ENCODE measurements at regions of chr2 and their contacts with region 1.

Region 1: DNA sequence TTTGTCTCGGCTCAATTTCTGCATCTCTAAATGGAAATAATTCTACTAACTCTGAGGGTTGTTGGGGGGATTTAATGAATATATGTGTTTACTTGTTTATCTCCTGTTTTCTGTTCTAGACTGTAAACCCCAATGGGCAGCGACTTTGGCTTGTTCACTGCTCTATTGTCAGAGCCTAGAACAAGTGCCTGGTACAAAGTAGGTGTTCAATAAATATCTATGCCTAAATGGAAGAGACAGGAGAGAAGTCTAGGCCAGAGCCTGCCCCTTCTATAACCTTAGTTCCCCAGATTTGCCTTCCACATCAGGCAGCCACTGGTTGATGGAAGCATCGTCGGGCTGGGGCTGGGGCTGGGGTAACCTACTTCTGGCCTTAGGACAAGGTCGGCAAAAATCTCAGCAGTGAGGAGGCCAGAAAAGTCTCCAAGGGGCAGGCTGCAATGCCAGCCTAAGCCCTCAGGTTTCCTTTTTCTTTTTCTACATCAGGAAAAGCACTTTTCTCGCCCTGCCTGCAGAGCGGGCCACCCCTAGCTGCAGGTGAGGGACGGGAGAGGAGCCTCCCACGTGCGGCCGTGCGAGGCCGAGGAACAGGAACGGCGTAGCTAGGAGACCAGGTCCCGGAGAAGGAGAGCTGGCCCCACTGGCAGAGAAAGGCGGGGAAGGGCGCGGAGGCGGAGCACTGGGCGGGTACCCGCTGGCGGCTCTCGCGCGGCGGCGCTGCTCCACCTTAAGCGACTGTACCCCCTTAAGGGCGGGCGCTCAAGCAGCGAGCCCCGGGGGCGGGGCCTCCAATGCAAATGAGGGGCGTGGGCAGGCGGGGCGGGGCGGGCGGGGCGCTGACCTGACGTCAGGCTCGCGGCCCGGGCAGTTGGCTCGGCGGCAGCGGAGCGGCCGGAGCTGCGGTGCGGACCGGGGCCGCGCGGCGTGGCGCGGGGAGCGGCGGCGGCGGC is at the start of gene CNNM4:
- DNase-seq: peak; percentile 82 to 95 (median 91)
- ATAC-seq: peak; percentile 96
- H3K4me3 ChIP-seq: peak within 1 kb of the TSS; percentile 83
- H3K4me3 Mint-ChIP-seq: peak within 1 kb of the TSS; percentile 85 to 96 (median 89)
- H3K27ac ChIP-seq: peak within 1 kb of the TSS; percentile 81
- H3K27ac Mint-ChIP-seq: peak within 1 kb of the TSS; percentile 80 to 94 (median 90)
- H3K4me1 ChIP-seq: peaks cover 46 to 53% of the 10 kb centered on the region in 2 donors
- H3K4me1 Mint-ChIP-seq: peaks cover 41 to 57% (median 49%) of the 10 kb centered on the region in 7 donors
- H3K27me3 ChIP-seq: no peaks in the 10 kb centered on the region
- H3K27me3 Mint-ChIP-seq: no peaks in the 10 kb centered on the region
- total RNA-seq, gene CNNM4: 4.6 to 9.5 (median 5.5) TPM

Region 2: DNA sequence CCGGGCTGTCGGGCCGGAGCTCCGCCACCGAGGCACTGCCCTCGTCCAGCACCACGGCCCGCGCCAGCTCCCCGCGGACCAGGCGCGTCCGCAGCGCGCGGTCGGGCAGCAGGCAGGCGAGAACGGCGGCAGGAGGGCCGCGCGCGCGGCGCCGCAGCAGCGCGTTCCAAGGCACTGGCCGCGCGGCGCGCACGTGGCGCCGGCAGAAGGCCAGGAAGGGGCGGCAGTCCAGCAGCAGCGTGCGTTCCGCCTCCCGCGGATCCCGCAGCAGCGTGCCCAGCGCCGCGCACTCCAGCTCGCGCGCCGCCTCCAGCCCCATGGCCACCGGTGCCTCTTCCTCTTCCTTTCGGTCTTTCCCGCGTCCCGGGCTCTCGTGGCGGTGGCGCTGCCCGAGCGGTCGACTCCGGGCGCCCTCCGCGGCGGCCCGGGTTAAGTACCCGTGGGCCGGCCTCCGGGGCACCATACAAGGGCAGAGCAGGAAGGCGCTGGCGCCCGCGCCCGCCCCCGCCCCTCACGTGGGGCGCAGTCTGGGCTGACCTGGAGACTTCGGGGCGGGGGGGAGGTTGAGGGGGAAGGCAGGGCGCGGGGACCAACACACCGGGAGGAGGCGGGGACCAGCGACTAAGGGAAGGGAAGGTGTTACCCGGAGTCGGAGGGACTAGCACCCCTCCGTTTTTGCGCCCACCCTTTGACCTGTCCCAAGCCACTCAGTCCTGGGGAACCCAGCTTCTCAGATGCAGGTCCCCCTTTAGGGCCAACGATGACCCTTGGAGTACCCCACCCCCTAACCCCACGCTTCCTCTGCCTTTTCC is 615.1 kb before region 1 on chr2 and contains the start of gene DUSP2:
- CTCF ChIA-PET with region 1: no interaction called
- POLR2A ChIA-PET with region 1: no interaction called
- intact Hi-C with region 1: loop called in 1 of 2 experiments (anchors 5 kb)
- DNase-seq: peak; percentile 79 to 97 (median 83)
- ATAC-seq: peak; percentile 61
- H3K4me3 ChIP-seq: peak within 1 kb of the TSS; percentile 69
- H3K4me3 Mint-ChIP-seq: peak within 1 kb of the TSS; percentile 90 to 98 (median 95)
- H3K27ac ChIP-seq: peak within 1 kb of the TSS; percentile 99
- H3K27ac Mint-ChIP-seq: peak within 1 kb of the TSS; percentile 96 to 100 (median 99)
- H3K4me1 ChIP-seq: peaks cover 50 to 52% of the 10 kb centered on the region in 2 donors
- H3K4me1 Mint-ChIP-seq: peaks cover 35 to 69% (median 62%) of the 10 kb centered on the region in 7 donors
- H3K27me3 ChIP-seq: no peaks in the 10 kb centered on the region
- H3K27me3 Mint-ChIP-seq: no peaks in the 10 kb centered on the region
- total RNA-seq, gene DUSP2: 22.1 to 255 (median 50.3) TPM

Region 3: DNA sequence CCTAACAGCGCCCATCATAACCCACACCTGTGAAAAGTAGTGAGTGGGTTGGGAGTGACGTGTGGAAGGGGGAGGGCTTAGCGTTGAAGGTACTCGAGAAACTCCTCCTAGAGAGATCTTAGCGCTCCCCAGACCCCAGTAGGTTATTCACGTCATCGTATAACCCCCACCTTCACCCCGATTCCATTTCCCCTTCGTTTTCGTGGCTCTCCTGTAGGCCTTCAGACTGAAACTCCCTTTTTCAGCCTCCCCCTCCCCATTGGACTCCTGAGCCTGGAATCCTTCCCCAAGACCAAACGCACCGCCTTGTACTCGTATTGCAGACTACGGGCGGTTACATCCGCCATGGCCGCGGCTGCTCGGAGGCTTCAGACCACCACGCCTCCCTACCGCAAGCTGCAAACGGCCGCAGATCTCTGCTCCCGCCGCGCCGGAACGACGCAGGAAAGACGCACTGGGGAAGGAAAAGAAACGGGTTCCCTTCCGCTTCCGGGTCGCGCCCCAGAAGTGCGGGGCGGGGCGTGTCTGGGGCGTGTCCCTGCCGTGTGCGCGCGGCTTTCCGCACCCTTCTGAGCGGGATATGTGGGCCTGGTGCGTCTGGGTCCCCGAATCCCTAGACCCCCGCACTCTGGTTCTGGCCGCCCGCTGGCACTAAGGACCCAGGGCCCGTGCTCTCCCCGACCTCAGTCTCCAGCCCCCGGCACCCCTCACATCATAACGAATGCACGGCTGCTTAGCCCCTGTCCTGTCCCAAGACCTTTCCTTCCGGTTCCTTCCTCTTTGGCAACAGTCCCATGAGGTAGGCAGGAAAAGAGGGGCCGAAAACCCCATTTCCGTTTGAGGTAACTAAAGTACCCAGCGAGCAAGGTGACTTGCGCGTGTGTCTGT is 455.0 kb before region 1 on chr2 and contains the start of gene SNRNP200:
- CTCF ChIA-PET with region 1: no interaction called
- POLR2A ChIA-PET with region 1: no interaction called
- intact Hi-C with region 1: loop called in 1 of 2 experiments (anchors 5 kb)
- DNase-seq: peak; percentile 77 to 92 (median 90)
- ATAC-seq: peak; percentile 96
- H3K4me3 ChIP-seq: peak within 1 kb of the TSS; percentile 85
- H3K4me3 Mint-ChIP-seq: peak within 1 kb of the TSS; percentile 94 to 100 (median 99)
- H3K27ac ChIP-seq: peak within 1 kb of the TSS; percentile 94
- H3K27ac Mint-ChIP-seq: peak within 1 kb of the TSS; percentile 97 to 100 (median 99)
- H3K4me1 ChIP-seq: peaks cover 30 to 41% of the 10 kb centered on the region in 2 donors
- H3K4me1 Mint-ChIP-seq: peaks cover 41 to 61% (median 58%) of the 10 kb centered on the region in 7 donors
- H3K27me3 ChIP-seq: no peaks in the 10 kb centered on the region
- H3K27me3 Mint-ChIP-seq: no peaks in the 10 kb centered on the region
- total RNA-seq, gene SNRNP200: 165 to 255 (median 212) TPM

Region 4: DNA sequence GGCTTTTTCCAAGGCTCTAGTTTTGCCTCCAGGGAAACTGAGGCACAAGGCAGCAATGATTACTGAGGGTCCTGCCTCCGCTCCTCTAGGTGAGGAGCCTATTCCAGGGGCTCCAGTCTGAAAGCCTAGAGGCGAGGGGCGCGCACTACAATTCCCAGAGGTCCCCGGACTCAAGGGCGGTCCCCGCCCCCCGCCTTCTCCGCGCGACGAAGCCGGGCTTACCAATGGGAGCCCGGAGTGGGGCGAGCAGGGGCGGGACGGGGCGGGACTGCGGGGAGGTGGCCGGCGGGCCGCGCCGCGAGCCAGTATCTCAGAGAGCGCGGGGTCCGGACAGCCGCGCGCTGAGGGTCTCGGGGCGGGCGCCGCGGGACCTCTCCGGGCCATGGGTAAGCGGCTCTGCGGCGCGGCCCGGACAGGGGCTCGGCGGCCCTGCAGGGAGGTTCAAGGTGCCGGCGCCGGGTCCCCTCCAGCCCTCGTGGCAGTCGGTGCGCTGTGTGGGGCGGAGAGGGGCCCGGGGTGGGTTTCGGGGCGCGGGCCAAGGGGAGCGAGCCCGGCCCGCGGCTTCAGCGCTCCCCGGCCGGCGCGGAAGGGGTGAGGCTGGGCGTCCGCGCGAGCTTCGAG is 223.8 kb before region 1 on chr2 and contains the start of gene ARID5A:
- CTCF ChIA-PET with region 1: no interaction called
- POLR2A ChIA-PET with region 1: interaction called, 17 read pairs
- intact Hi-C with region 1: loop called (anchors 2 to 5 kb)
- DNase-seq: peak; percentile 82 to 93 (median 88)
- ATAC-seq: peak; percentile 70
- H3K4me3 ChIP-seq: peak within 1 kb of the TSS; percentile 84
- H3K4me3 Mint-ChIP-seq: peak within 1 kb of the TSS; percentile 91 to 98 (median 96)
- H3K27ac ChIP-seq: peak within 1 kb of the TSS; percentile 99
- H3K27ac Mint-ChIP-seq: peak within 1 kb of the TSS; percentile 97 to 100 (median 99)
- H3K4me1 ChIP-seq: peaks cover 39 to 41% of the 10 kb centered on the region in 2 donors
- H3K4me1 Mint-ChIP-seq: peaks cover 37 to 74% (median 50%) of the 10 kb centered on the region in 7 donors
- H3K27me3 ChIP-seq: no peaks in the 10 kb centered on the region
- H3K27me3 Mint-ChIP-seq: no peaks in the 10 kb centered on the region
- total RNA-seq, gene ARID5A: 82.4 to 182 (median 113) TPM

Region 5: DNA sequence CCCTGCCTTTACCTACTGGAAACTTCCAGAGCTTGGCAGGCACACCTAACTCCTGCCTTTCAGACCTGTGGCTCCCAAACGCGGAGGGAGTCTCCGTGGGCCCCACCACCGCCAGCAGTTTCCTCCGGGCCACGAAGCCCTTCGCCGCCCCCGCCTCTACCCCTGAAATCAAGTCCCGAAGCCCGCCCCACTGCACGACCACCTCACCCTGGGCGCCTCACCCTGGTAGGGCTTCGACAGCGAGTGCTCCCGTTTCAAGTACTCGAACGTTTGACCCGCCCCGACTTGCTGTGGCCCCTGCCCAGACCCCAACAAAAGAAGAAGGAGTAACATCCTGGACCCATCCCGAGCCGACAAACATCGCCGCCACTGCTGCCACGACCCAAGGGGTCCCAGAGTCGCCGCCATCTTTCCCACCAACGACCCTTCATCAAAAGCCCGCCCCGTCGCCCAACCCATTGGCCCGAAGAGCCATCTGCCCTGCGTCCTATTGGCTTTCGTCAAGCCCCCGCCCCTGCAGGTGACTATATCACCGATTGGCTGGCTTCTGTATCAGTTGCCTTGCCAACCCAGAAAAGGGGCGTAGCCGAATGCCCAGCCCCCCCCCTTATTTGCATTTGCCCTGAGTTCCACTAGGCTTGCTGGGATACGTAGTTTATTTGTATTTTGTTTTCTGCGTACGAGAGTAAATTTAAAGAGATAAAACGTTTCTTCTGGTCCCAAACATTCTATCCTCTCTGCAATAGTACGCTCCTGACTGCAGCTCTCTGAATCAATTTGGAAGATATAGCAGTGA is 20.5 kb before region 1 on chr2 and contains the start of gene LMAN2L:
- CTCF ChIA-PET with region 1: interaction called, 8 read pairs
- POLR2A ChIA-PET with region 1: interaction called, 6 read pairs
- intact Hi-C with region 1: loop called (anchors 1 kb)
- DNase-seq: peak; percentile 78 to 99 (median 94)
- ATAC-seq: peak; percentile 100
- H3K4me3 ChIP-seq: peak within 1 kb of the TSS; percentile 70
- H3K4me3 Mint-ChIP-seq: peak within 1 kb of the TSS; percentile 92 to 100 (median 97)
- H3K27ac ChIP-seq: peak within 1 kb of the TSS; percentile 75
- H3K27ac Mint-ChIP-seq: peak within 1 kb of the TSS; percentile 83 to 96 (median 90)
- H3K4me1 ChIP-seq: peaks cover 6% of the 10 kb centered on the region in 2 donors
- H3K4me1 Mint-ChIP-seq: peaks cover 20 to 48% (median 37%) of the 10 kb centered on the region in 7 donors
- H3K27me3 ChIP-seq: no peaks in the 10 kb centered on the region
- H3K27me3 Mint-ChIP-seq: no peaks in the 10 kb centered on the region
- total RNA-seq, gene LMAN2L: 5.0 to 10.9 (median 9.2) TPM

Region 6: GRCh38 chr2:96816128-96816835 is 56.0 kb after region 1 on chr2 and contains the start of gene CNNM3:
- CTCF ChIA-PET with region 1: interaction called, 3 read pairs
- POLR2A ChIA-PET with region 1: interaction called, 9 read pairs
- intact Hi-C with region 1: loop called (anchors 1 to 5 kb)
- DNase-seq: peak; percentile 89 to 99 (median 93)
- ATAC-seq: peak; percentile 96
- H3K4me3 ChIP-seq: peak within 1 kb of the TSS; percentile 74
- H3K4me3 Mint-ChIP-seq: peak within 1 kb of the TSS; percentile 86 to 96 (median 92)
- H3K27ac ChIP-seq: peak within 1 kb of the TSS; percentile 79
- H3K27ac Mint-ChIP-seq: peak within 1 kb of the TSS; percentile 75 to 96 (median 86)
- H3K4me1 ChIP-seq: peaks cover 37 to 43% of the 10 kb centered on the region in 2 donors
- H3K4me1 Mint-ChIP-seq: peaks cover 36 to 62% (median 58%) of the 10 kb centered on the region in 7 donors
- H3K27me3 ChIP-seq: no peaks in the 10 kb centered on the region
- H3K27me3 Mint-ChIP-seq: no peaks in the 10 kb centered on the region
- total RNA-seq, gene CNNM3: 32.1 to 51.5 (median 44.6) TPM

Region 7: GRCh38 chr2:96960153-96960961 is 200.0 kb after region 1 on chr2:
- CTCF ChIA-PET with region 1: no interaction called
- POLR2A ChIA-PET with region 1: interaction called, 6 read pairs
- intact Hi-C with region 1: loop called in 1 of 2 experiments (anchors 1 kb)
- DNase-seq: peak; percentile 58 to 87 (median 75)
- ATAC-seq: peak; percentile 50
- H3K4me3 ChIP-seq: no peak overlapping the region
- H3K4me3 Mint-ChIP-seq: peak overlapping the region; percentile 37 to 83 (median 64)
- H3K27ac ChIP-seq: no peak overlapping the region
- H3K27ac Mint-ChIP-seq: peak overlapping the region; percentile 55 to 99 (median 92)
- H3K4me1 ChIP-seq: peaks cover 42 to 47% of the 10 kb centered on the region in 2 donors
- H3K4me1 Mint-ChIP-seq: peaks cover 36 to 57% (median 53%) of the 10 kb centered on the region in 7 donors
- H3K27me3 ChIP-seq: no peaks in the 10 kb centered on the region
- H3K27me3 Mint-ChIP-seq: peaks cover 0 to 2% (median 0%) of the 10 kb centered on the region in 5 donors

Measured in naive thymus-derived CD4-positive, alpha-beta T cell (primary cell).